ENCODE measurements at regions of chr15 and their contacts with region 1.

Region 1: DNA sequence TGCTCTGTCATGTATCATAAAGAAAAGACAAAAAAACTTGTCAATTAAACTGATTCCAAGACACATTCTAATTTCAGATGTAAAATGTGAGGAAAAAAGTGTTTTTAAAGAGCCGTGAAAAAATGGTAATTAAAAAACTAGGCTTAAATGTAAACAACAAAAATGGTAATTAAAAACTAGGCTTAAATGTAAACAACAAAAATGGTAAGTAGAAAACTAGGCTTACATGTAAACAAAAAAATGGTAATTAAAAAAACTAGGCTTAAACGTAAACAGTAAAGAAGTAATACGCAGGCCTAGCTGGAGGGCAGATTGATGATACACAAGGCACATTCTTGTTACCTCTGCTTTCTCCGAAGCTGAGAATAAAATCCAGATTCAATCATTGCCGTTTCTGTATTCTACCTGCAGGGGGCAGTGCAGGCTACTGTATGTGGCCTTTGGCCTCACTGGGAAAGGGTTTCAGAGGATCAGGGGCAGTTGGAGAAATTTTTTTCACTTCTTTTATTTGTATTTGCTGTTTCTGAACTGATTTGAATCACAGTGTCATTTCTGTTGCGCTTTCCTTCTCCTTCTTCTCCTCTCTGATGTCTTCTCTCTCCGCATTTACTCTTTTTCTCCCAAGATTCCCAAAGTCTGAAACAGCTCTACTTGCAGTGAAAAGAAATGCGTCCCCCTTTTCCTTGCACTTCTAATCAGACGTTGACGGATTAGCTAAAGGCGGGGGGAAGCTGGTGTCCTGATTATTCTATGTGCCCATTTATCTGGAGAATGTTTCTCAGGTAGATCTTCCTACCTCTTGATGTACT is 67.2 kb upstream of the MCTP2 start:
- DNase-seq: no peak
- ATAC-seq: no peak
- H3K4me3 Mint-ChIP-seq: no peak overlapping the region
- H3K27ac Mint-ChIP-seq: no peak overlapping the region
- H3K4me1 Mint-ChIP-seq: peaks cover 2% of the 10 kb centered on the region
- H3K27me3 Mint-ChIP-seq: no peaks in the 10 kb centered on the region
- CTCF ChIP-seq: peak; percentile 73

Region 2: GRCh38 chr15:94083467-94084052 is 80.6 kb before region 1 on chr15:
- CTCF ChIA-PET with region 1: no interaction called
- POLR2A ChIA-PET with region 1: no interaction called
- intact Hi-C with region 1: no loop called
- DNase-seq: no peak
- ATAC-seq: no peak
- H3K4me3 Mint-ChIP-seq: no peak overlapping the region
- H3K27ac Mint-ChIP-seq: no peak overlapping the region
- H3K4me1 Mint-ChIP-seq: no peaks in the 10 kb centered on the region
- H3K27me3 Mint-ChIP-seq: peaks cover 8% of the 10 kb centered on the region
- CTCF ChIP-seq: no peak

Region 3: DNA sequence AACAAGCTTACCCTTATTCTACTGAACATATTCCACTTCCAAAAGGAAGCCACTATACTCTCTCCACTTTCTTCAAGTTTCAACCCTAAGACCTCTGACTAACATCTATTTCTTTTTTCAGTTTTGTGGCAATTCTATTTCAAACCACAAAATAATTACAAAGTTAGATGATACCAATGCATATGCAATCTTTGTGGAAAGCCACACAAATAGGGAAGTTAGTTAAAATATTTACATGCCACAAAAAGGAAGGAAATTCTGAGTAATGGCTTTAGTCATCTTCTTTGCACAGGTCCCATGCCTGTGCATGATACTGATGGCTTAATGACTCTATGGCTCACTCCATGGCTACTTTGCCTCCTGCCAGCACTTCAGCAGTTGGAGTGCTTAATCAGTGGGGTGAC is 10.2 kb after region 1 on chr15:
- CTCF ChIA-PET with region 1: interaction called, 13 read pairs
- POLR2A ChIA-PET with region 1: interaction called, 3 read pairs
- intact Hi-C with region 1: no loop called
- DNase-seq: no peak
- ATAC-seq: peak; percentile 91
- H3K4me3 Mint-ChIP-seq: peak overlapping the region; percentile 39
- H3K27ac Mint-ChIP-seq: peak overlapping the region; percentile 31
- H3K4me1 Mint-ChIP-seq: peaks cover 25% of the 10 kb centered on the region
- H3K27me3 Mint-ChIP-seq: peaks cover 19% of the 10 kb centered on the region
- CTCF ChIP-seq: no peak

Region 4: GRCh38 chr15:94306700-94307650 is 142.8 kb after region 1 on chr15:
- CTCF ChIA-PET with region 1: interaction called, 10 read pairs
- POLR2A ChIA-PET with region 1: no interaction called
- intact Hi-C with region 1: no loop called
- DNase-seq: no peak
- ATAC-seq: peak; percentile 86
- H3K4me3 Mint-ChIP-seq: peak overlapping the region; percentile 66
- H3K27ac Mint-ChIP-seq: peak overlapping the region; percentile 93
- H3K4me1 Mint-ChIP-seq: peaks cover 48% of the 10 kb centered on the region
- H3K27me3 Mint-ChIP-seq: no peaks in the 10 kb centered on the region
- CTCF ChIP-seq: no peak

Region 5: DNA sequence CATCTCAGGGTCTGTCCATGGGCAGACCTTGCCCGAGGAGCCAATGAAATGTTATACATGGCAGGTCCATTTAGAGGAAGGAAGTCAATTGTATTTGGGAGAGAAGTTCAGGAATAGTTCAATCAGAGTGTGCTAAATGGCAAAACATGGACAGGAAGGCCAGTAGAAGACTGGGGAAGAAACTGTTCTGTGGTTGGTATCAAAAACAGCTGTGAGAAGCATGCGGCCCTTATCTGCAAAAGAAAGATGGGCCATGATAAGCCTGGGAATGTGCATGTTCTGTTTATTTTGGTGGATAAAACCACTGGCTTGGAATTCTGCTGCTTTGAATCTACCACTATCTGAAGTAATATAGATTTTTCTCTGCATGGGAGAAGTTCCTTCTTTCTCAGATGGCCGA is 167.5 kb after region 1 on chr15:
- CTCF ChIA-PET with region 1: interaction called, 348 read pairs
- POLR2A ChIA-PET with region 1: no interaction called
- intact Hi-C with region 1: no loop called
- DNase-seq: no peak
- ATAC-seq: no peak
- H3K4me3 Mint-ChIP-seq: no peak overlapping the region
- H3K27ac Mint-ChIP-seq: no peak overlapping the region
- H3K4me1 Mint-ChIP-seq: peaks cover 4% of the 10 kb centered on the region
- H3K27me3 Mint-ChIP-seq: no peaks in the 10 kb centered on the region
- CTCF ChIP-seq: no peak

Region 6: GRCh38 chr15:94576889-94577533 is 412.8 kb after region 1 on chr15:
- CTCF ChIA-PET with region 1: no interaction called
- POLR2A ChIA-PET with region 1: no interaction called
- intact Hi-C with region 1: loop called (anchors 2 kb)
- DNase-seq: no peak
- ATAC-seq: no peak
- H3K4me3 Mint-ChIP-seq: no peak overlapping the region
- H3K27ac Mint-ChIP-seq: no peak overlapping the region
- H3K4me1 Mint-ChIP-seq: no peaks in the 10 kb centered on the region
- H3K27me3 Mint-ChIP-seq: peaks cover 37% of the 10 kb centered on the region
- CTCF ChIP-seq: no peak

Measured in activated B cell treated with CpG ODN at 0.5 μM for 24 hours (primary cell).